PC-3 (cell line): ENCODE measurements at regions of chr9 and their contacts with region 1.

Region 1: GRCh38 chr9:98570663-98571440 is 137.9 kb downstream of the GABBR2 start:
- DNase-seq: no peak
- ATAC-seq: no peak
- H3K4me3 ChIP-seq: no peak overlapping the region
- H3K27ac ChIP-seq: no peak overlapping the region
- H3K4me1 ChIP-seq: peaks cover 8% of the 10 kb centered on the region
- H3K27me3 ChIP-seq: no peaks in the 10 kb centered on the region
- CTCF ChIP-seq: no peak

Region 2: GRCh38 chr9:98600631-98601245 is 29.9 kb after region 1 on chr9:
- CTCF ChIA-PET with region 1: interaction called, 12 read pairs
- POLR2A ChIA-PET with region 1: no interaction called
- intact Hi-C with region 1: no loop called
- DNase-seq: no peak
- ATAC-seq: no peak
- H3K4me3 ChIP-seq: no peak overlapping the region
- H3K27ac ChIP-seq: no peak overlapping the region
- H3K4me1 ChIP-seq: no peaks in the 10 kb centered on the region
- H3K27me3 ChIP-seq: no peaks in the 10 kb centered on the region
- CTCF ChIP-seq: no peak